Left cardiac atrium (tissue), 4 donors: ENCODE measurements at regions of chr10 and their contacts with region 1.

Region 1: GRCh38 chr10:28663576-28664313 is 13.6 kb upstream of the BAMBI start:
- DNase-seq: peak; percentile 82
- ATAC-seq: peak; percentile 86 to 94

Region 2: GRCh38 chr10:28875549-28876081 is 211.9 kb after region 1 on chr10:
- intact Hi-C with region 1: no loop called
- DNase-seq: no peak
- ATAC-seq: no peak

Region 3: DNA sequence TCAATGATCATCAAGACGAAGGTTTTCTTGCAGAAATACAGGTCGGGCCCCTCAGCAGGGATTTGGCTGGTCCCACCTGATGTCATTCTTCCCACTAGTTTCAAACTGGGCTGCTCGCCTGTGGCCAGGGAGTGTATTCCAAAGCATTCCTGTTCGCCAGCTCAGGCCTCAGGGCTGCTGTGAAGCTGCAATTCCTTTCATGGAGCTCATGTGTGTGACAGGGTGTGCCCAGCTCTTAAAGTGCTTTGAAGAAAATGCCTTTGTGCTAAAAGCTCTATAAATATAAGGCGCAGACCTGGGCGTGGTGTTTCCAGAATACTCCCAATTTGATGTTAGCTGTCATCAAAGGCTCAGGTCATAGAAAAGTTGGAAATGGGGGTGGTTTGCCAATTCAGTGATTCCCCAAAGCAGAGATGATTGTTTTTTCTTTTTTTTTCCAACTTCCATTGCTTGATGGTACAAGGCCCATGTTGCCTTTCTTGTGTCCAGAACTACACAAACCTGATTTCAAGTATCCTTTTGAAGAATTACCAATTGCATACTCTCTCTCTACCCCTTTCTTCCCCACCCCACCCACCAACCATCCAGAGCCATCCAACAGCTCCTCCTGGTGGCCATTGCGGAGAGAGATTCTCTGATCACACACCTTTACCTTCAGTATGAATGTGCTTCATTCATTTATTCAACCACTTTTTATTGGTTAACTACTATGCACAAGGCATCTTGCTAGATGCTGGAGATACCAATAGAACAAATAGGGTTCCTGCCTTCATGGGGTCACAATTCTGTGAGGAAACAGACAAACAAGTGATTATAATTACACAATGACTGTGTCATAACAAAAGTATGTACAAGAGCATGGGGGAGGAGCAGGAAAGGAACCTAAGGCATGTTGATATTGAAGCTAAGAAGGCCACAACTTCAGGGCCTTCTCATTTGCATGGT is 327.9 kb after region 1 on chr10:
- intact Hi-C with region 1: loop called in 1 of 2 experiments (anchors 2 kb)
- DNase-seq: peak; percentile 36
- ATAC-seq: peak; percentile 80 to 89

Region 4: GRCh38 chr10:29131952-29132820 is 468.4 kb after region 1 on chr10:
- intact Hi-C with region 1: loop called (anchors 2 to 5 kb)
- DNase-seq: peak; percentile 74
- ATAC-seq: peak; percentile 78 to 79

Region 5: DNA sequence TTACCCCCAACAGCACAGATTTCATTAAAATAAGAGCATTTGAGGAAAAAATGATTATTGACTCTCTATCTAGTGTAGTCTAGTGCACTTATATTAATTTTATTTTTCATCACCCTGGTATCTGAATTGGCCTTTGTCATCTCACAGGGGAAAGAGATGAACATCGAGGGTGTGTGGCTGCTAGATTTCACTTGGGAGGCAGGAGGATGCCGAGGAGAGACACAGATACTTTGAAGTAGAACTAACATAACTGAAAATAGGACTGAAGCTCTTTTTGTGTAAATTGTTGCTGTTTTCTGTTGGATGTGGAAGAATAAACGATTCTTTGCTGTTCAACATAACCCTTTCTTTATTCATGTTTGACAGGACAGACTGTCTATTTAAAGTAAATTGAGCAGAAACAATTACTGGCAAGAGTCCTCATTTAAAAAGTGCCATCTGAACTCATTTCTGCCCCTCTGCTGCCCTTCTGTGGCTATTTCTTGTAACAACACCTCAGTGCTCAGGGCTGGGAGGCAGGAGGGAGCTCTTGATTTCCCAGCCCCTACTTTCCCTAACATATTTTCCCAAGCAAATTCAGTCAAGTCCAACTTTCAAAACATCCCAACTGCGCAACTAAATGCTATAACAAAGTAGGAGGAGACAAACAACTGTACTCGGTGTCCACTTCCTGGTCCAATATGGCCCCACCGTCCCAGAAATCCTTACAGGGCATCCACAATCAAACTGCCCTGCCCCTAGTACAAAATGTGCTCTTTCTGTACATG is 640.7 kb after region 1 on chr10:
- intact Hi-C with region 1: loop called (anchors 5 to 10 kb)
- DNase-seq: peak; percentile 48
- ATAC-seq: peak; percentile 81 to 93